Heart right ventricle (tissue), 16 donors: ENCODE measurements at regions of chr3 and their contacts with region 1.

Region 1: GRCh38 chr3:72855001-72855400 is 6.8 kb upstream of the SHQ1 start:
- DNase-seq: no peak
- ATAC-seq: no peak
- H3K4me3 ChIP-seq: no peak overlapping the region
- H3K27ac ChIP-seq: no peak overlapping the region
- H3K4me1 ChIP-seq: no peaks in the 10 kb centered on the region
- H3K27me3 ChIP-seq: no peaks in the 10 kb centered on the region
- CTCF ChIP-seq: no peak

Region 2: DNA sequence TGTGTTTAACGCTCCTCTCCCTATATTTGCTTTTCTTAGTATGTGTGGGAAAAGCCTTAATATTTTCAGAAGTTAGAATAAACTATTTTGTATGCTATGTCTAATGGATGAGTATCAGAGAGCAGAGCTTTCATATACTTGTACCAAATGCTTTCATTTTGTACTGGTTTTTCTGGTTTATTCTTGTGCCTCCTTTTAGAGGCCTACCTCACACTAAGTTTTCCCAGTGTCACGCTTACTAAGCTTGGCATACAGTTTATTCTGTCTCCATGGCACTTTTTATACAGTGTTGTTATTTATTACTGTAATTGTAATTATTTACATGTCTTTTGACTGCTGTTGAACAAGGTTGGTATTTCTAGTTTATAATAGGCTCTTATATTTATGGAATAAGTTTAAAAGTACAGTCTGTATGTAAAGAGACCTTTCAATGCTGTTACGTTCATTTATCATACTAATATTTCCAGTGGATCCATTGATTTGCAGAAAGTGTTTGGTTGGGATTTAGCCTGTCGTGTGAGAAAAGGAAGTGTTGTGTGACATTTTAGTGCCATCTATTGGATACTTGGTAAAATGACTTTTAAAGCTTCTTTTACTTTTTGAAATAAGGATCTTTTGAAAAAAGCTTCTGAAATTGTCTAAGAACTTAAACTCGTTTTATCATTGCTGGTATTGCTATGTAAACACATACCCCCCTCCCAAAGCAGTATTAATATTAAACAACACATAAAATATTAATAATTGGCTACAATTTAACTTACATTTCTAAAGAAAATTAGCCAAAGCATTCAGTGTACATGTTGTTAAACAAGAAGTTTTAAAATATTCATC is 201.2 kb after region 1 on chr3:
- intact Hi-C with region 1: loop called in 1 of 10 experiments (anchors 10 kb)
- DNase-seq: no peak
- ATAC-seq: peak in 4 of 8 donors; percentile 55 to 82 (median 58)
- H3K4me3 ChIP-seq: no peak overlapping the region
- H3K27ac ChIP-seq: peak overlapping the region in 3 of 10 donors; percentile 23 to 33 (median 26)
- H3K4me1 ChIP-seq: peaks cover 0 to 43% (median 17%) of the 10 kb centered on the region in 9 donors
- H3K27me3 ChIP-seq: no peaks in the 10 kb centered on the region
- CTCF ChIP-seq: peak; percentile 29 to 70 (median 55)